Ascending aorta (tissue), 2 donors: ENCODE measurements at regions of chr1 and their contacts with region 1.

Region 1: GRCh38 chr1:41496080-41497055 is 11.9 kb upstream of the EDN2 start:
- DNase-seq: peak; percentile 61 to 95
- H3K4me3 ChIP-seq: peak overlapping the region; percentile 24 to 43
- H3K27ac ChIP-seq: peak overlapping the region; percentile 93 to 97
- H3K4me1 ChIP-seq: peaks cover 27 to 69% of the 10 kb centered on the region in 2 donors
- H3K27me3 ChIP-seq: no peaks in the 10 kb centered on the region
- CTCF ChIP-seq: peak in 2 of 3 experiments; percentile 20 to 37

Region 2: GRCh38 chr1:40802078-40802741 is 694.2 kb before region 1 on chr1:
- intact Hi-C with region 1: loop called (anchors 10 kb)
- DNase-seq: peak; percentile 49 to 92
- H3K4me3 ChIP-seq: peak overlapping the region; percentile 36 to 59
- H3K27ac ChIP-seq: peak overlapping the region; percentile 84 to 95
- H3K4me1 ChIP-seq: peaks cover 31 to 50% of the 10 kb centered on the region in 2 donors
- H3K27me3 ChIP-seq: no peaks in the 10 kb centered on the region
- CTCF ChIP-seq: no peak

Region 3: GRCh38 chr1:41662061-41662764 is 165.8 kb after region 1 on chr1:
- intact Hi-C with region 1: loop called (anchors 5 kb)
- DNase-seq: peak; percentile 46 to 87
- H3K4me3 ChIP-seq: peak overlapping the region; percentile 71 to 96
- H3K27ac ChIP-seq: peak overlapping the region; percentile 97 to 99
- H3K4me1 ChIP-seq: peaks cover 4 to 20% of the 10 kb centered on the region in 2 donors
- H3K27me3 ChIP-seq: no peaks in the 10 kb centered on the region
- CTCF ChIP-seq: no peak

Region 4: DNA sequence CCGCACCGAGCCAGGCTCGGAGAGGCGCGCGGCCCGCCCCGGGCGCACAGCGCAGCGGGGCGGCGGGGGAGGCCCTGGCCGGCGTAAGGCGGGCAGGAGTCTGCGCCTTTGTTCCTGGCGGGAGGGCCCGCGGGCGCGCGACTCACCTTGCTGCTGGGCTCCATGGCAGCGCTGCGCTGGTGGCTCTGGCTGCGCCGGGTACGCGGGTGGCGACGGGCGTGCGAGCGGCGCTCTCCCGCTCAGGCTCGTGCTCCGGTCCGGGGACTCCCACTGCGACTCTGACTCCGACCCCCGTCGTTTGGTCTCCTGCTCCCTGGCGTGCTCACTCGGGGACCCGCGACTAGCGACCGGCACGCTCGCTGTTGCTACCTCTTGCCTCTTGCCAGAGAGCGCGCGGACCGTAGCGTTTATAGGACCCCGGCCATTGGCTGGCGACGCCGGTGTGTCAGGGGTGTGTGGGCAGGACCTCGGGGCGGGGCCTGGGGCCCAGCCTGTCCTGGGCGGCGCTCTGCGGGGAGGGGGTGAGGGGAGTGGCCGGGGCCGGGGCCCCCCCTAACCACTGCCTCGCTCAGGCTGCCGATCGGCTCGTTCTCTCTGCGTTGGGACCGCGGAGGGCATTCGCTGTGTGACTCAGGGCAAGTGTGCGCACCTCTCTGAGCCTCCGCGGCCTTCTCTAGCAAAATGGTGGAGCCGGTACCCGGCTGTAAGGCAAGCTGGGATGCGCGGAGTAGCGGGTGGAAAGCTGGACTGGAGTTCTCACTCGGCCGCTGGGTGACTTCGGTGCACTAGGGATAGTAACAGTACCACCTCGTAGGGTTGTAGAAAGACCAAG is 1462.3 kb after region 1 on chr1 and contains the start of gene SLC2A1:
- intact Hi-C with region 1: loop called (anchors 10 kb)
- DNase-seq: peak; percentile 88 to 97
- H3K4me3 ChIP-seq: peak within 1 kb of the TSS; percentile 94 to 96
- H3K27ac ChIP-seq: peak within 1 kb of the TSS; percentile 93 to 97
- H3K4me1 ChIP-seq: peaks cover 13 to 34% of the 10 kb centered on the region in 2 donors
- H3K27me3 ChIP-seq: no peaks in the 10 kb centered on the region
- CTCF ChIP-seq: peak in 1 of 3 experiments; percentile 3
- total RNA-seq, gene SLC2A1: 15.5 TPM